ENCODE measurements at regions of chr4 and their contacts with region 1.

Region 1: GRCh38 chr4:81471588-81472288 is at the start of gene RASGEF1B:
- DNase-seq: peak; percentile 95 to 97 (median 96)
- H3K4me3 ChIP-seq: peak within 1 kb of the TSS; percentile 83 to 94
- H3K4me3 Mint-ChIP-seq: peak within 1 kb of the TSS; percentile 90 to 97 (median 95)
- H3K27ac ChIP-seq: peak within 1 kb of the TSS; percentile 83
- H3K27ac Mint-ChIP-seq: peak within 1 kb of the TSS; percentile 91 to 99 (median 98)
- H3K4me1 ChIP-seq: peaks cover 22% of the 10 kb centered on the region
- H3K4me1 Mint-ChIP-seq: peaks cover 25 to 47% (median 37%) of the 10 kb centered on the region in 4 donors
- H3K27me3 ChIP-seq: no peaks in the 10 kb centered on the region
- H3K27me3 Mint-ChIP-seq: no peaks in the 10 kb centered on the region
- total RNA-seq, gene RASGEF1B: 9.0 to 9.4 TPM

Region 2: DNA sequence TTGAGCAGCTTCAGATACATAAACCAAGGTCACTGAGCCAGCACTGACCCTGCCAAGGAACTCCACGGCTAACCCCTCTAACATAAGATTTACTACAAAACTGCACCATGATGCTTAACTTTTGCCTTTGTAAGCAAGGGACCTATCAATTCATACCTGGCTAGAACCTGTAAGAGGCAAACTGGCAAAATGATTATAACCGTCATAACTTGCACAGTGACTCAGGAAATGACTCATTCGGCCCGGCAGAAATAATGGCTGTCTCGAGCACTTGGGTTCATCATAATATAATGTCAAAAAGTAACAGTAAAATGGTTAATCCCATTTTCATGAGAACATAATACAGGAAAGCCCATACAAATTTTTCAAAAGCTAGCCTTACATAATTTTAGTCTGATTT is 17.2 kb before region 1 on chr4:
- CTCF ChIA-PET with region 1: interaction called, 10 read pairs
- POLR2A ChIA-PET with region 1: no interaction called
- intact Hi-C with region 1: no loop called
- DNase-seq: peak in 1 of 5 donors; percentile 44
- H3K4me3 ChIP-seq: no peak overlapping the region
- H3K4me3 Mint-ChIP-seq: no peak overlapping the region
- H3K27ac ChIP-seq: no peak overlapping the region
- H3K27ac Mint-ChIP-seq: peak overlapping the region in 4 of 7 donors; percentile 19 to 37 (median 25)
- H3K4me1 ChIP-seq: no peaks in the 10 kb centered on the region
- H3K4me1 Mint-ChIP-seq: peaks cover 5 to 11% (median 10%) of the 10 kb centered on the region in 4 donors
- H3K27me3 ChIP-seq: no peaks in the 10 kb centered on the region
- H3K27me3 Mint-ChIP-seq: no peaks in the 10 kb centered on the region

Region 3: GRCh38 chr4:81562093-81562492 is 90.4 kb after region 1 on chr4:
- CTCF ChIA-PET with region 1: interaction called, 5 read pairs
- POLR2A ChIA-PET with region 1: interaction called, 4 read pairs
- intact Hi-C with region 1: loop called (anchors 5 kb)
- DNase-seq: peak in 4 of 5 donors; percentile 15 to 37 (median 30)
- H3K4me3 ChIP-seq: no peak overlapping the region
- H3K4me3 Mint-ChIP-seq: peak overlapping the region in 4 of 8 donors; percentile 1 to 76 (median 20)
- H3K27ac ChIP-seq: no peak overlapping the region
- H3K27ac Mint-ChIP-seq: peak overlapping the region; percentile 4 to 90 (median 52)
- H3K4me1 ChIP-seq: peaks cover 12% of the 10 kb centered on the region
- H3K4me1 Mint-ChIP-seq: peaks cover 5 to 9% (median 7%) of the 10 kb centered on the region in 4 donors
- H3K27me3 ChIP-seq: no peaks in the 10 kb centered on the region
- H3K27me3 Mint-ChIP-seq: peaks cover 0 to 1% of the 10 kb centered on the region in 2 donors

Region 4: DNA sequence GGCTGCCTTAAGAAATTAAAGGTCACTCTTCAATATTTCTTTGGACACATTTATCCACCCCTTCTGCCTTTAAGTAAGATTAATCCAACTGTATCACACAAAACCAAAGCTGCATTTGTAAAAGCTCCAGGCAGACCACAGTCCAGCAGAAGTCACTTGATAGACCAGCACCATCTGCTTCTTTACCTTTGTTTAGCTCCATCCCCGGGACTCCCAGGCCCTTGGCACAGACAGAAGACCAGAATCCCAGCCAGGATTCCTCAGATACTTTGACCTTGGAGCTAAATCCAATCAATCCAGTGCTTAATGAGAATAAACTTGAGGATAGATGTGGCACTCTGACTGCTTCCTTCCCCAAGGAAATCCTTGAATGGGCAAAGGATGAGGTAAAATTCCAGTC is 333.1 kb after region 1 on chr4:
- CTCF ChIA-PET with region 1: interaction called, 12 read pairs
- POLR2A ChIA-PET with region 1: no interaction called
- intact Hi-C with region 1: no loop called
- DNase-seq: no peak
- H3K4me3 ChIP-seq: no peak overlapping the region
- H3K4me3 Mint-ChIP-seq: no peak overlapping the region
- H3K27ac ChIP-seq: no peak overlapping the region
- H3K27ac Mint-ChIP-seq: no peak overlapping the region
- H3K4me1 ChIP-seq: no peaks in the 10 kb centered on the region
- H3K4me1 Mint-ChIP-seq: peaks cover 0 to 6% (median 3%) of the 10 kb centered on the region in 4 donors
- H3K27me3 ChIP-seq: no peaks in the 10 kb centered on the region
- H3K27me3 Mint-ChIP-seq: peaks cover 0 to 4% of the 10 kb centered on the region in 2 donors

Region 5: GRCh38 chr4:81852031-81852715 is 380.4 kb after region 1 on chr4:
- CTCF ChIA-PET with region 1: interaction called, 249 read pairs
- POLR2A ChIA-PET with region 1: interaction called, 6 read pairs
- intact Hi-C with region 1: no loop called
- DNase-seq: no peak
- H3K4me3 ChIP-seq: no peak overlapping the region
- H3K4me3 Mint-ChIP-seq: no peak overlapping the region
- H3K27ac ChIP-seq: no peak overlapping the region
- H3K27ac Mint-ChIP-seq: no peak overlapping the region
- H3K4me1 ChIP-seq: no peaks in the 10 kb centered on the region
- H3K4me1 Mint-ChIP-seq: no peaks in the 10 kb centered on the region
- H3K27me3 ChIP-seq: no peaks in the 10 kb centered on the region
- H3K27me3 Mint-ChIP-seq: peaks cover 0 to 3% of the 10 kb centered on the region in 2 donors

Region 6: GRCh38 chr4:82268050-82268825 is 796.5 kb after region 1 on chr4:
- CTCF ChIA-PET with region 1: interaction called, 21 read pairs
- POLR2A ChIA-PET with region 1: interaction called, 7 read pairs
- intact Hi-C with region 1: loop called (anchors 1 kb)
- DNase-seq: peak; percentile 41 to 52 (median 47)
- H3K4me3 ChIP-seq: no peak overlapping the region
- H3K4me3 Mint-ChIP-seq: peak overlapping the region in 2 of 8 donors; percentile 5 to 61
- H3K27ac ChIP-seq: no peak overlapping the region
- H3K27ac Mint-ChIP-seq: peak overlapping the region in 2 of 7 donors; percentile 10 to 74
- H3K4me1 ChIP-seq: peaks cover 10% of the 10 kb centered on the region
- H3K4me1 Mint-ChIP-seq: peaks cover 8 to 31% (median 10%) of the 10 kb centered on the region in 4 donors
- H3K27me3 ChIP-seq: no peaks in the 10 kb centered on the region
- H3K27me3 Mint-ChIP-seq: peaks cover 2 to 9% of the 10 kb centered on the region in 2 donors

Region 7: DNA sequence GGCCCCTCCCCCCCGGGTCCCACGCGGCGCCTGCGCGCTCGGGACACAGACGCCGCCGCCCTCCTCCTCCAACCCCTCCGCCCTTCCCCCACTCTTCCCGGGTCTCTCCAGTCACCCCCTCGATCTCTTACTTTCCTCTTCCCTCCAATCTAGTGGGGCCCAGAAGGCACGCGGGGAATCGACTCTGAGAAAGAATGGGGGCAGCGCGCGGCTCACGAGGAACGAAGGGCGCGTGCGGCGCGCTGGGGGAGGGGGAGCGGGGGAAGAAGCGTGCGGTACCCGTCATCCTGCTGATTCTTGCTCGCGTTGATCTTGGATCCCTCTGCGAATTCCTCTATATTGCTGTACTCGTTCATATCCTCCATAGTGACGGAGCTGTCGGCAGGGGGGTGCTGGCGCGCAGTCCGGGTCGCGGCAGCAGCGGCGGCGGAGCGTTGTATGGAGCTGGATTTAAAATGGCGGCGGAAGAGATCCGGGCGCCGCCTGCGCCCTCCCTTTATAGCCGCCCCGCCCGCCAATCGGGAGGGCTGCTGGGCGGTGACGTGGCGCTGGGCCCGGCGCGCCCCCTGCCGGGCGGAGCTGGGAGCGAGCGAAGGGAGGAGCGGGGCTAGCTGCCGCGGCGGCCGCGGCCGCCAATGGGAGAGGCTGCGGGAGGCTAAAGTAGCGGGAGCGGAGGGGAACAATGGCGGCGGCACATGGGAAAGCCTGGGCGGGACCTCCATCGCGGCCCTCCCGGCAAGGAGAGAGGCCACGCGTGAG is 957.4 kb after region 1 on chr4:
- CTCF ChIA-PET with region 1: interaction called, 3 read pairs
- POLR2A ChIA-PET with region 1: interaction called, 18 read pairs
- intact Hi-C with region 1: loop called (anchors 2 kb)
- DNase-seq: peak; percentile 90 to 96 (median 93)
- H3K4me3 ChIP-seq: peak overlapping the region; percentile 66 to 73
- H3K4me3 Mint-ChIP-seq: peak overlapping the region; percentile 98 to 100 (median 100)
- H3K27ac ChIP-seq: peak overlapping the region; percentile 99
- H3K27ac Mint-ChIP-seq: peak overlapping the region; percentile 97 to 100 (median 100)
- H3K4me1 ChIP-seq: peaks cover 64% of the 10 kb centered on the region
- H3K4me1 Mint-ChIP-seq: peaks cover 41 to 83% (median 59%) of the 10 kb centered on the region in 4 donors
- H3K27me3 ChIP-seq: no peaks in the 10 kb centered on the region
- H3K27me3 Mint-ChIP-seq: no peaks in the 10 kb centered on the region